GM10248 (cell line): ENCODE measurements at regions of chr11 and their contacts with region 1.

Region 1: DNA sequence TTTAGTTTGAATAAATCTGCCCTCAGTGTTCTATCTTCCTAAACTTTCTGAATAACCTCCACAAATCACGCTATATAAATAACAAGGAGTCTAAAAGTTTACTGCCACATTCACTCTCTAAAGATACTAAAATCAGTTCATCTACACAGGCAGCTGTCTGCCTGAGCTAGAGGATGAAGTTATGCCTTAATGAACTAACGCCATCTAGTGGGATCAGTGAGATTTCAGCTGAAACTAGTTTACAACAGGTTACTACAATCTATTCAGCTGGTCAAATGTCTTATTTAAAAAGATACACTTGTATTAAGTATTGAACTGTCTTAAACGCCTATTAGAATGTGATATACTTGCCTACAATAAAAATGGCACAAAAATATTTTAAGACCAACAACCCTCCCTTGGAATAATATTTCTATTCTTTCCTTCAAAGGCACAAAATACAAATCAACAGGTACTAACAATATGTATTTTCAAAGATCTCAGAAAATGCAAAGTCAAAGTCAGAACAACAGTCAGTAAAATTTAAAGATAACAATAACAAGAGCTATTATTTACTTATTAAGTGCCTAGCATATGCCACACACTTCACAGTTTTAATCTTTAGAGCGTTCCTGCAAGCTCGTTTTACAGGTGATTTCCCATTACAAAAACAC is 84.1 kb downstream of the LARGE2 start:
- DNase-seq: peak; percentile 59
- CTCF ChIP-seq: peak; percentile 67

Region 2: DNA sequence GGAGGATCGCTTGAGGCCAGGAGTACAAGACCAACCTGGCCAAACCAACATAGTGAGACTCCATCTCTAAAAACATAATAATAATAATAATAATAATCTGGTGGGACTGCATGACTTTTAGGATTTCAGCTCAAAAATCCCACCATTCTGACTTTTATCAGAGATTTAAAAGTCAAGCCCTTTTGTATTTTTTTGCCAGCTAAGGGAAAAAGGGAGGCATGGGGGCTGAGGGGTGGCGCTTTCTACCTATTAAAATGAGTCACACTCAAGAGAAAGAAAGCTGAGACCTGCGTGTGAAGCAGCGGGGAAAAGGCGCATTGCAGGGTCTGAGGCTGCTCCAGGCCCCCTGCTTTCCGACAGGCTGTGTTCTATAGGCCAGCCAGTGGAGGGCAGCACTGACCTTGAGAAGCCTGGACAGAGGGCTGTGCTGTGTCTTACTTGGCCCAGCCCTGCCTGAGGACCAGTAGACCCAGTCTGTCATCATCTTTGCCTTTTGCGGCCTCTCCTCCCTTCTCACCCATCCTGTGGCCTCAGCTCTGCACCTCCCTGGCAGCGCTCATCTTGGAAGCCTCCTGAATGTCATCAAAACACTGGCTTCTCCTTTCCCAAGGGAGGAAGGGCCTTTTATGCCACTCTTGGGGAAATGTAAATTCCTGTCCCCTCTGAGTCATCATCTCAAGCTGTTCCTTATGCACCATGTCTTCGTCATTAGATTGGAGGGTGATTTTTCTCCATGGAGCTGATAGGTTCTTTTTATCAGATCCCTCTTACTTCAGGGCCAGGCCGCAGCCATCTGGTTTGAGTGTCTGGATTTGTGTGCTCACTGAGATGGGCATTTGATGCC is 133.8 kb before region 1 on chr11:
- CTCF ChIA-PET with region 1: interaction called, 27 read pairs
- POLR2A ChIA-PET with region 1: no interaction called
- DNase-seq: peak; percentile 52
- CTCF ChIP-seq: peak; percentile 60

Region 3: DNA sequence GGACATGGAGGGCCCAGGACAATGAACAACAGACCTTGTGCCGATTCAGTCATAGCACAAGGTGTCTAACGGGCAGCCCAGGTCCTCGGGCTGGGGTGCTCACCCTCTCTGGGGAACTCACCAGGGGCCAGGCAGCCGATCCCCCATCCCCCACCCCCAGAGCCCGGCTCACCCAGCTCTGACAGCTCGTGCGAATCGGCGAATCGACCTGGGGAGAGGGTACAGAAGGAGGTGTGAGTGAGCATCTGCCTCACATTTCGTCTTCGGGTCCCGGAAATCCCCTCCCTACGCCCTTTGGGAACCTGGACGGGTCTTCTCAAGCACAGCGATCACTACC is 89.3 kb before region 1 on chr11:
- CTCF ChIA-PET with region 1: no interaction called
- POLR2A ChIA-PET with region 1: no interaction called
- DNase-seq: no peak
- CTCF ChIP-seq: no peak

Region 4: DNA sequence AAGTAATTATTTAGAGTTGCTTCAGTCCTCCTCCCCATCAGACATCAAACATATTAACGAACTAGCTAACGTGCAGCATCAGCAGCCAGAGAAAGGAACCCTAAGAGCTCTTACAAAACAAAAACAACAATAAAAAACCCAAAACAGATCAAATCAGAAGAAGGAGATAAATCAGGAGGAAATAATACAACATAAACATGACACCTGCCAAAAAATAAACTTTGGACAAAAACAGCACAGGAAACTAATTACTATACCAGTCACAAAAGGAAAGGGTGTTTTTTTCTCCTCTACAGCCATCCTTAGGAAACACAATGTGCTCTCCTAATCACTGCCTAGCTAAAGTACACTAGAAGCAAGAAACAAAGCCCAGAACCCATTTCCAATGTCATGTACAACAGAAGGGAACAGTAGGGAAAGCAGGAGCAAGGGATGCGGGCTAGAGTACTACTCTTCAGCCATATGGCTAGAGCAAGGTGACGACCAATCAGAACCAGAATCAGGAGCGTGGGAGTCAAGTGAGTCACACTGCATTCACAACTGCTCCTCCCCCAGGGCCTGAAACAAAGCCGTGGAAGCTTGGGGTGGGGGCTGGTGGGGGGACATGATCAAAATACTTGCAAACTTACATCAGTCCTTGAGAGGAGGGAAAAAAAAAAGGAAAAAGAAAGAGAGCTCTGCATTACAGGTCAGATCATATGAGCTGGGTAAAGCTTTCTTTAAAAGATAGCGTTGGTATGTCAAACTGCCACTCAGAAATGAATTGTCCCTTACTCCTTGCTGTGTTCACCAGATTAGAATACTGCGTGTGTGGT is 23.7 kb before region 1 on chr11:
- CTCF ChIA-PET with region 1: interaction called, 14 read pairs
- POLR2A ChIA-PET with region 1: no interaction called
- DNase-seq: no peak
- CTCF ChIP-seq: no peak

Region 5: DNA sequence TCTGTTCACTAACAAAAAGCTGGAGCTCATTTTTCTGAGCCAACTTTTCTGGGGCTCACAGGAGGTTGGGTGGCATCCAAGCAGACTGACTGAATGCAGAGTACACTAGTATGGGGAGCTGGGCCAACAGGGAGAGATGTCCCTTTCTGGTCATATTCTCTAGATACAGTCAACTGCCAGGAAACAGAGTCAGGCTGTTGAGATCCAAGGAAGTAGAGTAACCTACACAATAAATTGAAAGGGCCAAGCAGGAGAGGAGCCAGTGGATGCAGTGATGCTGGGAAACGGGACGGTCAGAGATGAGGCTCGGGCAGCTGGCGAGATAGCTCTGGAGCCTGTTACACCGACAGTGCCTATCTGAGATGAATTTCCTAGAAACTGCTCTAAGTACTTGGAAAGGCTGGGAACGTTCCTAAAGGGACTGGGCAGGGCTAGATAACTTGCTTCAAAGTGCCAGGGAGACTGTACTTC is 13.0 kb before region 1 on chr11:
- CTCF ChIA-PET with region 1: interaction called, 58 read pairs
- POLR2A ChIA-PET with region 1: no interaction called
- DNase-seq: no peak
- CTCF ChIP-seq: no peak

Region 6: GRCh38 chr11:46017341-46017740 is 10.8 kb after region 1 on chr11:
- CTCF ChIA-PET with region 1: interaction called, 33 read pairs
- POLR2A ChIA-PET with region 1: no interaction called
- DNase-seq: no peak
- CTCF ChIP-seq: no peak